ENCODE measurements at regions of chr9 and their contacts with region 1.

Region 1: GRCh38 chr9:87497604-87498045 is at the start of gene DAPK1:
- DNase-seq: peak in 9 of 10 donors; percentile 31 to 94 (median 59)

Region 2: DNA sequence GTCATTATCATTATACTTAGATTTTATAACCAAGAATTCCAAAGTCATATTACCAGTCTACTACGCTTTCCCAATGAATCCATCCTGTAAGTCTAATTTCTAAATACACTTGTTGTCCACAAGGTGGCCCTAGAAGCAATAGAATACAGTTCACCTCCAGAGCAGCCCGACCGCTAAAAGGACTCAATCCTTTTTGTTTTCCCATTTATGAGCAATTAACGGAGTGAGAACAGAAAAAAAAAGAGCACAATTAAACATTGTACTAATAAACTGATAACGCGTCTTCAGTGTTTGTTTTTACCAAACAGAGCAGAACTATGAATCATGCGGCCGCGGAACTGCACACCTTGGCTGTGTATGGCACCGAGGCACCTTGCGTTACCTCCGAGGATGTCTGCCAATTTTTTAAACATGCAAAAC is 160.7 kb before region 1 on chr9:
- intact Hi-C with region 1: loop called (anchors 5 kb)
- DNase-seq: no peak

Region 3: DNA sequence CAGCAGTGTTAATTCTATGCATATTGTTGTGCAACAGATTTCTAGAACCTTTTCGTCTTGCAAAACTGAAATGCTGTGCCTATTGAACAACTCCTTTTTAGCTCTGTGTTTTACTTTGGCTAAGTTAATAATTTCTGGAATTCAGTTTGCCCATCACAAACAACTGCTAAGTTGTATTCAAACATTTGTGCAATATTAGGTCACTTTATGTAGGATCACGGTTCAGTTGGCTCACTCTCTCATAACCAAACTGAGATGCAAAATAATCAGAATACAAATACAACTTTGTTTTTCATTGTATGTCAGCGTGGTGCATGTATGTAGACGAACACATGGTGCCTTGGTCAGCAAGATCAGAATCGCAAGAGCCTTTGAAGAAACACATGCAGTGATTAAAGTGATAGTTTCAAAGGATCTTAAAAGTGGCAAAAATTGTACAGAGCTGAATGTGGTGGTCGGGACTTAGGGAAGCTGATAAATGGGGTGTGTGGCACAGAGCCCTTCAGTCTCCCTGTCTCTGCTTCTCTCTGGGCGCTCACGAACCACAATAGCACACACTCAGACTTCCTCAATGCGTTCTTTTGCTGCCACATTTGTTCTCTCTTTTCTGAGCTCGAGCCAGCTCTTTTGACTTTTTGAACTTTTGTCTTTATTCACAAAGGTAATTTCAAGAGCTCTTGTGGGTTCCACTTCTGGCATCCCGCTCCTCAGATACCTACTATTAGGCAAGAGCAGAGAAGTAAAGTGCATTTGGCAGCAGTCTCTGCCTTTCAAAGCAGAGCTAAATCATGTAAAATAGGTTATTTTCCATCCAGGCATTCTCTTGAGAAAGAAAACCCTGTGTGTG is 115.9 kb after region 1 on chr9:
- intact Hi-C with region 1: loop called (anchors 10 kb)
- DNase-seq: no peak

Region 4: GRCh38 chr9:87656485-87656884 is 158.9 kb after region 1 on chr9:
- intact Hi-C with region 1: loop called (anchors 10 kb)
- DNase-seq: peak in 3 of 10 donors; percentile 34 to 90 (median 36)

Measured in posterior cingulate gyrus (tissue), 11 donors.